Psoas muscle (tissue), 8 donors: ENCODE measurements at regions of chr13 and their contacts with region 1.

Region 1: DNA sequence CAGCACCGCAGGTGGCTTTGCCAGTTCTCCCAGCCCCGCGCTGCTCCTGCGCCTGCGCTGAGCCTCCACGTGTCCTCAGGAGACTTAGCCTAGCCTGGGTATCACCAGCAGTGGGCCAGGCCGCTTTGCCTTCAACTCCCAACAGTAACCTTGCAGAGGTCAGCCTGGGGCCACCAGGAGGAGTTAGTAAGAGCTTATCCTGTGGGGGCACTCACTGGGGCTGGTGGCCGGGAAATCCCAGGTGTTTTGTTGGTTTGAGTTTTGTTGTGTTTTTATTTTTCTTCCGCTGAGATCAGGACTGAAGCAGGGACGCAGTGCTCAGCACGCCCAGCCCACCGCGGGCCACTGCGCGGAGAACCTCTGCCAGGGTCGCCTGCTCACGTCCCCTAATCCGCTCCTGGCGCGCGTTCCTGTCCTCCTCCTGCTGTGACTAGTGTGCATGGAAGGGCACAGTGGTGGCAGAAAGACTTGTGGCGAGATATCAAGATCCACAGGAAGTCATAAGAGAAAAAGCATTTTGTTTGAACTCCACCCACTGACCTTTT is 207.4 kb upstream of the RFC3 start:
- DNase-seq: peak; percentile 73 to 89
- ATAC-seq: peak; percentile 94 to 97 (median 95)
- H3K4me3 ChIP-seq: peak overlapping the region; percentile 71
- H3K27ac ChIP-seq: peak overlapping the region; percentile 93
- H3K4me1 ChIP-seq: peaks cover 11% of the 10 kb centered on the region
- H3K27me3 ChIP-seq: no peaks in the 10 kb centered on the region
- CTCF ChIP-seq: no peak

Region 2: DNA sequence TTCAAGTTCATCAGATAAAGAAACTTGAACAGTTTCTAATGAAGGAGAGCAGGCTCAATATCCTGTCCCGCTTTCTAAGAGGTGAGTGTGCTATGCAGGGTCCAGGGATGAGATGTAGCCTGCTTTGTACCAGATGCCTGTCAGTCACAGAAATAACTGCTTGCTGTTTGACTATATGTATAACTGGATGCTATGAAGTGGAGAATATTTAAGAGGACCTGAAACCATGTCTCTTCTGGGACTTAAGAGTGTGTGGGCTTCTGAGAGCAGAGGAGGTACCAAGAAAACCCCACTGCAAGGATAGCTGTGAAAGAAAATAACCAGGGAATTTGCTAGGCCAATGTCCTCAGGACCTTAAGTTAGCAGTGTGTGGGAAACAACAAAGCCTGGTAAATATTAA is 38.9 kb before region 1 on chr13:
- intact Hi-C with region 1: no loop called
- DNase-seq: no peak
- ATAC-seq: no peak
- H3K4me3 ChIP-seq: no peak overlapping the region
- H3K27ac ChIP-seq: no peak overlapping the region
- H3K4me1 ChIP-seq: no peaks in the 10 kb centered on the region
- H3K27me3 ChIP-seq: no peaks in the 10 kb centered on the region
- CTCF ChIP-seq: no peak

Region 3: GRCh38 chr13:33659466-33659865 is 48.9 kb after region 1 on chr13:
- intact Hi-C with region 1: loop called in 1 of 2 experiments (anchors 1 kb)
- DNase-seq: no peak
- ATAC-seq: no peak
- H3K4me3 ChIP-seq: no peak overlapping the region
- H3K27ac ChIP-seq: no peak overlapping the region
- H3K4me1 ChIP-seq: no peaks in the 10 kb centered on the region
- H3K27me3 ChIP-seq: no peaks in the 10 kb centered on the region
- CTCF ChIP-seq: no peak

Region 4: DNA sequence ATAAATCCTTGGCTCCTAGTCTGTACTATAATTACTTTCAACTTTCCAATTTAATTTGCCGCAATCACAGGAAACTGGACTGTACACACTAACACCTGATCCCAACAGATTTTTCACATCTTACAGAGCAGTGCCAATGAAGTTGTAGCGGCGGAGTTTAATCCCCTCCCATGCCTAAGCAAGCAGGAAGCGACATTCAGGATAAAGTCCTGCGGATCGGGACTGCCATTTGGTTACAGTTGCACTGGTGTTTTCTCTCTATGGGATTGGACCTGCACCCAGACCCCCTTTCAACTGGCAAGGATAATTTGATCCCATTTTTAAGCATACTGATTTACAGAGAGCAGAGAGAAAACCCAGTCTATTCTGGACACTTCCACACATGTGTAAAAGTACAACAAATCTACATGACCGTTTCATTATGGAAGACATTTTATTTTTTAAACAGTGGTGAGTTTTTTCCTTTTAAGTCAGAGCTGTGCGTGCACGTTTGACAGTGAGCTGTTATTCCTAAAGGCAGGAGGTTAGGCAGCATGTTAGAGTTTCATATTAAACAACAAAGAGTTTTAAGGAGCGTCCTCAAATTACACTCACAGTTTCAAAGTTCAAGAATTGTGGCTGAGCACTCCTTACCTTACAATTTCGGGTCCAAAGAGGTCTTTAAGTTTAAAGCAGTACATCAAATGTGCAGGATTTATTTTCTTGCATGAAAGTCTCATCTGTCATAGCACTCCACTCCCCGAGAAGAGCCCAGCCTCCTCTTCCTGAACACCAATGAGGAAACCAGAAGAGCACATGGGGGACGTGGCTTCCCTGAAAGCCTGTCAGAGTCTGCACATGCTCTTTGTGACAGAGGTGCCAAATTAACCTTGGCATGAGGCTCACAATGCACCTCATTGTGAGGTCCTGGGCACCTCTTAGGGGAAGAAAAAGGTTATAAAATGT is 65.8 kb after region 1 on chr13:
- intact Hi-C with region 1: loop called in 1 of 2 experiments (anchors 2 kb)
- DNase-seq: peak; percentile 37 to 53
- ATAC-seq: peak; percentile 95 to 99 (median 98)
- H3K4me3 ChIP-seq: peak overlapping the region; percentile 65
- H3K27ac ChIP-seq: peak overlapping the region; percentile 70
- H3K4me1 ChIP-seq: peaks cover 20% of the 10 kb centered on the region
- H3K27me3 ChIP-seq: no peaks in the 10 kb centered on the region
- CTCF ChIP-seq: no peak